ENCODE measurements at regions of chr3 and their contacts with region 1.

Region 1: DNA sequence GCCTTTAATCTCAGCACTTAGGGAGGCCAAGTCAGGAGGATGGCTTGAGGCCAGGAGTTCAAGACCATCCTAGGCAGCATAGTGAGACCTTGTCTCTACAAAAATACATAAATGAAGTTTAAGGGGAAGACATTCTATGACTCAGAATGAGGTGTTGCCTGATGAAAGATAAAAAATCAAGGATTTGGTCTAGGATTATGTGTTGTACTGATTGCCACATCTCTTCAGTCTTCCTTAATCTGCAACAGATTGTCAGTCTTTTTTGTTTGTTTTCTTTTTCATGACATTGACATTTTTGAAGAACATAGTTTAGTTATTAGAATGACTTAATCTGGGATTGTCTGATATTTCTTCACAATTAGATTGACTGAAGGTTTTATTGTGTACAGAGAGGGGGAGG is 26.3 kb upstream of the DPPA4 start:
- DNase-seq: no peak
- H3K4me3 ChIP-seq: no peak overlapping the region
- H3K27ac ChIP-seq: no peak overlapping the region
- H3K4me1 ChIP-seq: no peaks in the 10 kb centered on the region; a peak in 1 of 7 replicates
- H3K27me3 ChIP-seq: no peaks in the 10 kb centered on the region
- CTCF ChIP-seq: no peak
- EP300 ChIP-seq: no peak
- POLR2A ChIP-seq: no peak
- RAD21 ChIP-seq: no peak

Region 2: DNA sequence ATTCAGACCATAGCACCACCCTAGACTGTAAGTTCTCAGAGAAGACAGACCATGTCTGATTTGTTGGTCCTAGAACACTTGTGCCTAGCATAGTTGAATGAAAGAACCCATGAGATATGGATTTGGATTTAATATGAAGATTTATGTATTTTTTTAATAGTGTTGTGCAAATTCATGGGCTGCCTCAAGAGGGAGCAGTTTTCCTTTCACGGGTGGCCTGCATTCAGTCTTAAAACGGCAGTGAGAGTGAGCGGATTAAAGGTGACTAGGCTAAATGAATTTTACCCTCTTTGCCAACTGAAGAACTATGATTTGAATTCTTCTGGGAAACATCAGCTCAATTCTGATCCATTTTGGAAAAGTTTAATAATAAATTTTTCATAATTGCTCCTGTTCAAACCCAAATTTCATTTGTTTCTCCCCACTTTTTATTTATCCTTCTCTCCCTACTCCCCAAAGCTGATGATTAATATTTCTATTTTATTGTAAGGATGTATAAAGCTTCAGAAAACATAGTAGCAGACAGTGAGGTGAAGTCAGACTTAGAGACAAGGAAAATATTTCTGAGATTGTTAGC is 313.0 kb before region 1 on chr3:
- CTCF ChIA-PET with region 1: no interaction called
- POLR2A ChIA-PET with region 1: no interaction called
- DNase-seq: peak in 1 of 2 experiments; percentile 2
- H3K4me3 ChIP-seq: no peak overlapping the region
- H3K27ac ChIP-seq: no peak overlapping the region
- H3K4me1 ChIP-seq: peaks cover 0 to 6% (median 2%) of the 10 kb centered on the region in 4 experiments; a peak in 4 of 7 replicates
- H3K27me3 ChIP-seq: no peaks in the 10 kb centered on the region
- CTCF ChIP-seq: peak; percentile 28 to 56 (median 45)
- EP300 ChIP-seq: no peak
- POLR2A ChIP-seq: no peak
- RAD21 ChIP-seq: peak; percentile 55 to 62

Region 3: DNA sequence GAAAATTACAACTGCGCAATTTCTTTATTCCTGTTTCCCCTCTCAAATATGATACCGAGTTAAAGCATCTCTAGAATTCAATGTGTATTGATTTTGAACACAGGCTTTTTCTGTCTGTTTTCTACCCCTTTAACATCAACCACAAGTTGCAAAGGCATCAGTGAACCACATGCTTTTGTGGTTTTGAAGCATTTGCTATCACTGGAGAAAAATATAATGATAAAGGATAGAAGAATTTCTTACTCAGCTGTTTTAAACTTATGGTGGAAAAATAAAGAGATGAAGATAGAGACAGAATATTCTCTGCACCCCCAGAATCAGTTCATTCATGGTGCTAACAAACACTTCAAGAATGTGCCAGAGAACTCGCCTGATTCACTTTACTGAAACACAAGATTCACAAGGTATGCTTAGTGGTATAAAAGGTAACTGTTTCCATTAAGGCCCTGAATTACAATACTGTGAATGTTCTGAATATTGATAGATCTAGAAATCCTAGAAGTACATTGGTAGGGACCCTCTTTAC is 16.8 kb before region 1 on chr3:
- CTCF ChIA-PET with region 1: interaction called, 5 read pairs
- POLR2A ChIA-PET with region 1: interaction called, 122 read pairs
- DNase-seq: no peak
- H3K4me3 ChIP-seq: no peak overlapping the region
- H3K27ac ChIP-seq: no peak overlapping the region
- H3K4me1 ChIP-seq: peaks cover 0 to 11% (median 3%) of the 10 kb centered on the region in 4 experiments; a peak in 3 of 7 replicates
- H3K27me3 ChIP-seq: no peaks in the 10 kb centered on the region
- CTCF ChIP-seq: no peak
- EP300 ChIP-seq: no peak
- POLR2A ChIP-seq: no peak
- RAD21 ChIP-seq: no peak